ENCODE measurements at regions of chr16 and their contacts with region 1.

Region 1: DNA sequence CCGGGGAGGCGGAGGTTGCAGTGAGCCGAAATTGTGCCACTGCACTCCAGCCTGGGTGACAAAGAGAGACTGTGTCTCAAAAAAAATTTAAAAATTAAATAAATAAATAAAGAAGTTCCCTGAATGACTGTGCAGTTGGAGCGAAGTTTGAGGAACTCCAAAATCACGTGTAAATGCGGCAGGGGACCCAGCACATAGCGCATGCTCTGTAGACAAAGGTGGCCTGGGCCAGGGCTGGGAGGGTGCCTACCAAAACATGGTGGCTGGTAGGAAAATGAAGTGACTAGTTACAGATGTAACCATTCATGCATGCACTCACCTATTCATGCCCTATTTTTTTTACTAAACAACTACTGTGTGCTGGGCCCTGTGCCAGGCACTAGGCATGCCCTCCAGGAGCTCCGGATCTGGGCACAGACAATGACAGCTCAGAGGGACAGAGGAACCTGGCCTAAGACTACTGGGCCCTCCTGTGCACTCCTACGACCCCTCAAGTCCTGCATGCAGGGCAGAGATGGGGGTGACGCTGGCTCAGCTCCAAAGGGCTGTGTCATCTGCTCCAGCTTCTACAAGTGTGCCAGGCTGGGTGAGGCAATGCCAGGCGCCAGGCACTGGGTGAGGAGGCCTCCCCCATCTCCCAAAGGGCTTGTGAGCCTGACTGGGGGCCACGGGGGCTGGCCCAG is 65.3 kb downstream of the RMI2 start:
- DNase-seq: peak in 1 of 4 donors; percentile 50
- ATAC-seq: no peak
- H3K4me3 ChIP-seq: no peak overlapping the region
- H3K27ac ChIP-seq: no peak overlapping the region
- H3K4me1 ChIP-seq: no peaks in the 10 kb centered on the region
- H3K27me3 ChIP-seq: no peaks in the 10 kb centered on the region
- CTCF ChIP-seq: no peak
- POLR2A ChIP-seq: no peak

Region 2: GRCh38 chr16:11459722-11460121 is 49.2 kb after region 1 on chr16:
- intact Hi-C with region 1: no loop called
- DNase-seq: no peak
- ATAC-seq: no peak
- H3K4me3 ChIP-seq: no peak overlapping the region
- H3K27ac ChIP-seq: no peak overlapping the region
- H3K4me1 ChIP-seq: no peaks in the 10 kb centered on the region
- H3K27me3 ChIP-seq: no peaks in the 10 kb centered on the region
- CTCF ChIP-seq: no peak
- POLR2A ChIP-seq: no peak

Region 3: DNA sequence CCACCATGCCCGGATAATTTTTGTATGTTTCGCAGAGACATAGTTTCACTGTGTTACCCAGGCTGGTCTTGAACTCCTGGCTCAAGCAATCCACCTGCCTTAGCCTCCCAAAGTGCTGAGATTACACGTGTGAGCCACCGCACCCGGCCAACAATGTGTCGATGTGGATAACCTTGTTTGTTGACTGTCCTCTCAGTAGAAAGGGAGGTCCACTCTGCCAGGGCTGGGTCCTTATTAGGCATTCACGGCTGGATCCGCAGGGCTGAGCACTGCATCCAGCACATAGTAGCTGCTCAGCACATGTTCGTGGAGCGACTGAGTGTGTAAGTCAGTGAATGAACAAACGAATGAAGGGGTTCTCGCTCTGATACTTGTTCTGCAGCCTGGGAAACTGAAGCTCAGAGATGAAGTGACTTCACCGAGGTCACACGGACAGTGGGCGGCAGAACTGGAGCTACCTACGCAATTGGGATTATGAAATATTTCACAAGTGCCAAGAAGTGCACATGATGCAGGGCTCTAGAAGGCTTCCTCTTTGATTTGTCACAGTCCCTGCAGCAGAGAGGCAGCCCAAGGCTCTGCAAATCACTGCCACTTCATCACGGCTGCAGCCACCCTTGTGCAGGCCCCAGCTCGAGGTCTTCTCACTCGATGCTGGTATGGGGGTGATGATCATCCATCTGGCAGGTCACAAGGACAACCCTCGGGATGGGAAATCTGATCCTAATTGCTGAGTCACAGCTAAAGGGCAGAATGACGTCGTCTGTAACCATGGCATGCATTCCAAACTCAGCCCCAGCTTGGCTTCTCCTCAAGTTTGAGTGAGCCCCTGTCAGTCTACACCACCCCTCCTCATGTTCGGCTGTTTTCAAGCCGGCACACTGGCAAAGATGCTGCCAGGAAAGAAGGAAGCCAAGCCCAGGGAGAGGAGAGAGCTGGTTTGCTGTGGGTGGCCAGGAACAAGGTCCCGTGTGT is 229.7 kb after region 1 on chr16:
- intact Hi-C with region 1: loop called (anchors 10 kb)
- DNase-seq: peak; percentile 79 to 95 (median 86)
- ATAC-seq: peak; percentile 87
- H3K4me3 ChIP-seq: no peak overlapping the region
- H3K27ac ChIP-seq: peak overlapping the region; percentile 67 to 93 (median 88)
- H3K4me1 ChIP-seq: peaks cover 40% of the 10 kb centered on the region
- H3K27me3 ChIP-seq: no peaks in the 10 kb centered on the region
- CTCF ChIP-seq: peak in 1 of 7 experiments; percentile 6
- POLR2A ChIP-seq: peak; percentile 19 to 68 (median 59)

Region 4: GRCh38 chr16:11799509-11800381 is 389.2 kb after region 1 on chr16:
- intact Hi-C with region 1: loop called (anchors 10 kb)
- DNase-seq: no peak
- ATAC-seq: no peak
- H3K4me3 ChIP-seq: no peak overlapping the region
- H3K27ac ChIP-seq: peak overlapping the region in 1 of 4 donors; percentile 34
- H3K4me1 ChIP-seq: peaks cover 32% of the 10 kb centered on the region
- H3K27me3 ChIP-seq: no peaks in the 10 kb centered on the region
- CTCF ChIP-seq: no peak
- POLR2A ChIP-seq: no peak